A549 (cell line): ENCODE measurements at regions of chr15 and their contacts with region 1.

Region 1: GRCh38 chr15:68672781-68673205 is 94.0 kb downstream of the CORO2B start:
- DNase-seq: peak in 1 of 2 experiments; percentile 29
- ATAC-seq: peak; percentile 45 to 60; a peak in 3 of 6 replicates
- H3K4me3 ChIP-seq: no peak overlapping the region
- H3K27ac ChIP-seq: no peak overlapping the region
- H3K4me1 ChIP-seq: no peaks in the 10 kb centered on the region
- CTCF ChIP-seq: peak; percentile 28; the same call in 2 of the 3 replicates
- EP300 ChIP-seq: no peak
- POLR2A ChIP-seq: no peak
- RAD21 ChIP-seq: peak; percentile 27 to 53; a peak in 2 of 5 replicates

Region 2: DNA sequence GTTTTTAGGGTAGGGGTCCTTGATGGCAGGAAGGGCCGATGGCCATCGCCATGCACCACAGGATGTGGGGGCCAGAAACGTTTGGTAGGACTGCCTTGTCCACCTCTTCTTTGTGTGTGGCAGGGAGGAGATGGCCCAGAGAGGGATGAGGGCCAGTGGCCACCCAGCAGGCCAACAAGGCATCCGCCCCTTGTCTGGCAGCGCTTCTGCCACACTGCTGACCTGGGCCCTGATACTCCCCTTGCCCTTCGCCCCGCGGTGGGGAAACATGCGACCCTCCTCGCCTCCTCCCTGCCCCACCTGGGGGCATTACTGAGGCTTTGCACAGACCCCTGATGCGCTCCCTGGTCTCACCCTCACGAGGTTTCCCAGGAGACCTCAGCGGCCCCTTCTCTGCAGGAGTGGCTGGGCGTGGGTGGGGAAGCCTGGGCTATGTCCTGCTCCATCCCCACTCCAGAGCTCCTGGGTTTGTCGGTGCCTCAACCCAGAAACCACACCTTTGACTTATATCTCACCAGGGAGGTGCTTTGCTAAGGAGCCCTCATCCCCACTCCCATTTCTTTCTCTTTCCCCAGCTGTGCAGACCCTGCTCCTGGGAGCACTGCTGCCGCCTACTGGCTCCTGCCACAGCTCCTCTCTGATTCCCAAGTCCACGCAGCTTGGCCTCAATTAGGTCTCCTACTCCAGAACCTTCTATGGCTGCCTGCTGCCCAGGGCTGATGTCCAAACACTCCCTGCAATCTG is 356.6 kb before region 1 on chr15:
- CTCF ChIA-PET with region 1: interaction called, 32 read pairs
- POLR2A ChIA-PET with region 1: no interaction called
- DNase-seq: peak in 1 of 2 experiments; percentile 33
- ATAC-seq: peak; percentile 39 to 75; a peak in 4 of 6 replicates
- H3K4me3 ChIP-seq: no peak overlapping the region
- H3K27ac ChIP-seq: peak overlapping the region in 1 of 2 experiments; percentile 25; a peak in 1 of 6 replicates
- H3K4me1 ChIP-seq: no peaks in the 10 kb centered on the region
- CTCF ChIP-seq: peak; percentile 55
- EP300 ChIP-seq: no peak
- POLR2A ChIP-seq: no peak
- RAD21 ChIP-seq: peak; percentile 45 to 51; a peak in 4 of 5 replicates

Region 3: GRCh38 chr15:68449389-68449788 is 223.4 kb before region 1 on chr15:
- CTCF ChIA-PET with region 1: no interaction called
- POLR2A ChIA-PET with region 1: no interaction called
- DNase-seq: no peak
- ATAC-seq: no peak
- H3K4me3 ChIP-seq: no peak overlapping the region
- H3K27ac ChIP-seq: no peak overlapping the region
- H3K4me1 ChIP-seq: no peaks in the 10 kb centered on the region
- CTCF ChIP-seq: no peak
- EP300 ChIP-seq: no peak
- POLR2A ChIP-seq: no peak
- RAD21 ChIP-seq: no peak

Region 4: GRCh38 chr15:68559345-68560310 is 113.2 kb before region 1 on chr15:
- CTCF ChIA-PET with region 1: interaction called, 452 read pairs
- POLR2A ChIA-PET with region 1: interaction called, 7 read pairs
- DNase-seq: peak; percentile 84 to 91
- ATAC-seq: peak; percentile 90 to 96
- H3K4me3 ChIP-seq: peak overlapping the region; percentile 43
- H3K27ac ChIP-seq: peak overlapping the region; percentile 41 to 73; a peak in 5 of 6 replicates
- H3K4me1 ChIP-seq: no peaks in the 10 kb centered on the region
- CTCF ChIP-seq: peak; percentile 97
- EP300 ChIP-seq: no peak
- POLR2A ChIP-seq: no peak
- RAD21 ChIP-seq: peak; percentile 85 to 91

Region 5: DNA sequence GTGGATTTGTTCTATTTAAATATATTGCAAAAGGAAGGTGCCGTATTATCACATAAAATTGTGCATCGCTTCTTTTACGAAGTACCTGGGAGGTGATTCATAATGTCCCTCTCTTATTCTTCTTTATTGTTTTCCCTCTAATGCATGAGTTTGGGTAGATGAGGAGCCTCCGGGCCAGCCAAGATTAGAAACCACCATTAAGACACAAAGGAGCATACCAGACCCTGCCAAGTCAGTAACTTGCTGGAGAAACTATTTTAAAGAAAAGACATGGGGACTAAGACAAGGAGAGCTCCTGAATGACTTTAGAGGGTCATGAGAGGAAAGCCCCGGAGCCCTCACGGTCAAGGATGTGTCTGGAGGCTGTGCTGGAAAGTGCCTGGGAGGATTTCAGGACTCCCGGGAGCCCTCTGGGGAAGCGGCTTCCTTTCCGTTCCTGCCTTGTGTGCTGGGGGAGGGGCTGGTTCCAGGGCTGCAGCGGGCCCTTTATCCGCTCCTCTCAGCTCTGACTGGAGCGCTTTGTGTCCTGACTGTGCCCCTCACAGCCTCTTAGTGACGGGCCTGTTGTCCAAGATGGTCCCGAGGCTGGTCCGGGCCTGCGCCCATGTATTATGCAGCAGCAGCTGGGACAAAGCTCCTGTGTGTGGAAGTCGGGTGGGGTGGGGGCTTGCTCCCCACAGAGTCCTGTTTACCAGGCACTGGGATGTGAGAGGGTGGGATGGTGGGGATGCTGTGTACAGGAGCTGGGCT is 58.3 kb before region 1 on chr15:
- CTCF ChIA-PET with region 1: interaction called, 13 read pairs
- POLR2A ChIA-PET with region 1: no interaction called
- DNase-seq: no peak
- ATAC-seq: no peak
- H3K4me3 ChIP-seq: no peak overlapping the region
- H3K27ac ChIP-seq: no peak overlapping the region
- H3K4me1 ChIP-seq: 0 out of 3 replicates have a peak, but pooled peaks cover 3% of the 10 kb centered on the region
- CTCF ChIP-seq: no peak
- EP300 ChIP-seq: no peak
- POLR2A ChIP-seq: no peak
- RAD21 ChIP-seq: no peak

Region 6: DNA sequence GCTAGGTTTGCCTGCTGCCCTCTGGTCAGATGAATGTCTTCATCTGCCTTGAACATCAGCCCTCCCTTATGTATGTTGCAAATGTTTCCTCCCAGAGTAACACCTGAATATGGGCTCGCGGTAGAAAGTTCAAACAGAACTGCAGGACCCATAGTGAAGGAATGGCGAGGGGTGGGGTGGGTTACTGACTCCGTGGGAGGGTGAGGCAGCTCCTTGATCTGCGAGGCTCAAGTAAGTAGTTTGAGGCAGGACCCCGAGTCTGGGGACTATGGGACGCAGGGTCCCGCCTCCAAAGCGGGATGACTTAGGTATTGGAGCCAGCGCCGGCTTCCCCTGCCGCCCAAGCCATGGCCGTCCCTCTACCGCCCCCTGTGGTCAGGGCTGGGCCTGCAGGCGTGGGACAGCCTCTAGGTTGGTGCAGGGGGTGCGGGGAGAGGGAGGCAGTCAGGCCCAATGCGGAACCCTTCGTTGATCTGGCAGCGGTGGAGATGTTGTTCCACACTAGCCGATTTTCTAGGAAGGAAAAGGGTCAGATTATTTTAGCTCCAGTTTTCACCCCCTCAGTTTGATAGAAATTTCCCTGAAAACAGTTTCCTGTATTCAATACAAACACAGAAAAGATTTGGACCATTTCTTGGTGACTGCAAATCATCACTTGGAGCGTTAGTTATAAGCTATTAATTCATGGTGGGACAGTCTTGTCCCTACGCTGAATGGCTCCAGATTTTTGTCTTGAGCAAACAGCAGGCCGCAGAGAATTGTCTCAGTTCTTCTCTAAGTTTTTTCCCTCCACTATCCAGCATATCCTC is 21.7 kb before region 1 on chr15:
- CTCF ChIA-PET with region 1: interaction called, 205 read pairs
- POLR2A ChIA-PET with region 1: no interaction called
- DNase-seq: peak; percentile 78 to 90
- ATAC-seq: peak; percentile 93 to 99
- H3K4me3 ChIP-seq: no peak overlapping the region
- H3K27ac ChIP-seq: peak overlapping the region in 1 of 2 experiments; percentile 30; a peak in 2 of 6 replicates
- H3K4me1 ChIP-seq: no peaks in the 10 kb centered on the region
- CTCF ChIP-seq: peak; percentile 86
- EP300 ChIP-seq: no peak
- POLR2A ChIP-seq: no peak
- RAD21 ChIP-seq: peak; percentile 79

Region 7: GRCh38 chr15:68699124-68699880 is 26.5 kb after region 1 on chr15:
- CTCF ChIA-PET with region 1: interaction called, 29 read pairs
- POLR2A ChIA-PET with region 1: no interaction called
- DNase-seq: no peak
- ATAC-seq: no peak; a peak in 3 of 6 replicates
- H3K4me3 ChIP-seq: no peak overlapping the region
- H3K27ac ChIP-seq: no peak overlapping the region
- H3K4me1 ChIP-seq: no peaks in the 10 kb centered on the region
- CTCF ChIP-seq: no peak
- EP300 ChIP-seq: no peak
- POLR2A ChIP-seq: no peak
- RAD21 ChIP-seq: no peak